MCF 10A (cell line): ENCODE measurements at regions of chr15 and their contacts with region 1.

Region 1: DNA sequence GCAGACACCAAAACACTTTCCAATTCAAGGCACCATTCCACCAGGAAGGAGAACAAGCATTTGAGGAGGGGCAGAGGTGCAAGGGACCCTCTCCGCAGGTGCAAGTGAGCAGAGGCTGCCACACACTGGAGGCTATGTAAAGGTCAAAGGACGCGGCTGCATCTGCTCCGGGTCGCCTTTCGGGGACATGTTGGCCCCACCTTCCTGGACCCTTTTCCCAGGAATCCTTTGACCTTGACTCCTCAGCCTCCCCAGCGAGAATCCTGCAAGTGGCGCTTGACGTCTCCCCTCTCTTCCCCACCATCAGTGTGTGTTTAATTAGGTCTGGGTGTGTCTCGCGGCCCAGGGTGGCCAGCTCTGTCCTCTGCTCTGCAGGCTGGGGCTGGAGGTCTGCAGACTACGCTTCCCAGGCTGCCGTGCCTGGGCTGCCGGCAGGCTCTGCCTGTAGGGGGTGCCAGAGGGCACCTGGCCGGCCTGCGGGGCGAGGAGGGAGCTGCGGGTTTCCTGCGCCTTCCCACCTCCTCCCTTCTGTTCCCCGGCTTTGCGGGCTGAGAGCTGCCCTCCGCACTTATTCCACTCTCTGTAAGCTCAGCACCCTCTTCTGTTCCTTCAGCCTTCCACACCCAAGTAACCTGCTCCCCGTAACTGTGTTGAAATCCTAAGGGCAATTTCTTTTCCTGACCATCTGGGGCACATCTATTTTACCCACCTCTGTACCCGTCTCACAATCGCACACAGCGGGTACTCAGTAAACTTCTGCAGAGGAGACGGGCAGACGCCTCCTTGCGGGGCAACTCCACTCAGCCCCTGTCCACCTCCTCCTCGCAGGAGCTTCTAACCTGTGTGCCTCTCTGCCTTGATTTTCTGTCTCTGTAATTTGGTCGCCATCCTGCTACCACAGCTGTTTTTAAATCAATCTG is 129.8 kb downstream of the NSMCE3 start:
- DNase-seq: peak; percentile 11
- H3K4me3 Mint-ChIP-seq: no peak overlapping the region
- H3K27ac Mint-ChIP-seq: no peak overlapping the region
- H3K4me1 Mint-ChIP-seq: peaks cover 5% of the 10 kb centered on the region
- H3K27me3 Mint-ChIP-seq: peaks cover 38% of the 10 kb centered on the region
- CTCF ChIP-seq: peak; percentile 41

Region 2: GRCh38 chr15:29613951-29614382 is 474.2 kb after region 1 on chr15:
- CTCF ChIA-PET with region 1: no interaction called
- POLR2A ChIA-PET with region 1: no interaction called
- intact Hi-C with region 1: no loop called
- DNase-seq: peak; percentile 5
- H3K4me3 Mint-ChIP-seq: no peak overlapping the region
- H3K27ac Mint-ChIP-seq: no peak overlapping the region
- H3K4me1 Mint-ChIP-seq: no peaks in the 10 kb centered on the region
- H3K27me3 Mint-ChIP-seq: peaks cover 41% of the 10 kb centered on the region
- CTCF ChIP-seq: peak; percentile 32

Region 3: DNA sequence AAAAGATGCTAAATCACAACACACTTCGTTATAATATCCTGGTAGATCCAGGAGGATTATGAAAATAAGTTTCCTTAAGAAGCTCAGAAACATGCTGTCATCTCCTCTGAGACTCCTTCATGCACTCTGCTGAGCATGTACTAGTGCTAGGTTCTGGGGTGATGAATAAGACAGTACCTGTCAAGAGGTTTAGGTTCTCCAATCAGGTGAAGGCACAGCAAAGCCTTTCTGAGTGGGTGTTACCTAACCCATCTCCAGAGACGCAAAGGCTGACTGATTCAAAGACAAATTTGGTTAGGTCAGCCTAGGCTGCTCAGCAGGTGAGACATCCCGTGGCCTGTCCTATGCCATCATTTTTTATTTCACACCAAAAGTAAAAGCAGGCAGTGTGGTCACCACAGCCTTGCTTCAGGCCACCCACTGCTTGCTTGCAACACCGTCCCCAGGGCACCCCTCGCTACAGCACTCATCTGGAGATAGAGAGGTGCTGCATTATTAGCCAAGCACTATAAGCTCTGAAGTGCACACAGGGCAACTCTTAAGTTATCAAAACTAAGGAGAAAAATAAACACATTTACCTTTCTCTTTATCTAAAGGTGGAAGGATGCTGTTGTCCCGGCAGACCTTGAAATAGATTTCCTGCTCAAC is 565.3 kb after region 1 on chr15:
- CTCF ChIA-PET with region 1: no interaction called
- POLR2A ChIA-PET with region 1: no interaction called
- intact Hi-C with region 1: loop called (anchors 5 kb)
- DNase-seq: no peak
- H3K4me3 Mint-ChIP-seq: no peak overlapping the region
- H3K27ac Mint-ChIP-seq: no peak overlapping the region
- H3K4me1 Mint-ChIP-seq: no peaks in the 10 kb centered on the region
- H3K27me3 Mint-ChIP-seq: no peaks in the 10 kb centered on the region
- CTCF ChIP-seq: no peak